ENCODE measurements at regions of chrX and their contacts with region 1.

Region 1: GRCh38 chrX:69222103-69223090 is 57.1 kb upstream of the PJA1 start:
- DNase-seq: peak; percentile 59 to 81 (median 71)
- ATAC-seq: peak; percentile 84
- H3K4me3 ChIP-seq: no peak overlapping the region
- H3K4me3 Mint-ChIP-seq: no peak overlapping the region
- H3K27ac ChIP-seq: no peak overlapping the region
- H3K27ac Mint-ChIP-seq: no peak overlapping the region
- H3K4me1 ChIP-seq: peaks cover 6% of the 10 kb centered on the region
- H3K4me1 Mint-ChIP-seq: no peaks in the 10 kb centered on the region
- H3K27me3 ChIP-seq: no peaks in the 10 kb centered on the region
- H3K27me3 Mint-ChIP-seq: no peaks in the 10 kb centered on the region
- CTCF ChIP-seq: peak; percentile 65

Region 2: DNA sequence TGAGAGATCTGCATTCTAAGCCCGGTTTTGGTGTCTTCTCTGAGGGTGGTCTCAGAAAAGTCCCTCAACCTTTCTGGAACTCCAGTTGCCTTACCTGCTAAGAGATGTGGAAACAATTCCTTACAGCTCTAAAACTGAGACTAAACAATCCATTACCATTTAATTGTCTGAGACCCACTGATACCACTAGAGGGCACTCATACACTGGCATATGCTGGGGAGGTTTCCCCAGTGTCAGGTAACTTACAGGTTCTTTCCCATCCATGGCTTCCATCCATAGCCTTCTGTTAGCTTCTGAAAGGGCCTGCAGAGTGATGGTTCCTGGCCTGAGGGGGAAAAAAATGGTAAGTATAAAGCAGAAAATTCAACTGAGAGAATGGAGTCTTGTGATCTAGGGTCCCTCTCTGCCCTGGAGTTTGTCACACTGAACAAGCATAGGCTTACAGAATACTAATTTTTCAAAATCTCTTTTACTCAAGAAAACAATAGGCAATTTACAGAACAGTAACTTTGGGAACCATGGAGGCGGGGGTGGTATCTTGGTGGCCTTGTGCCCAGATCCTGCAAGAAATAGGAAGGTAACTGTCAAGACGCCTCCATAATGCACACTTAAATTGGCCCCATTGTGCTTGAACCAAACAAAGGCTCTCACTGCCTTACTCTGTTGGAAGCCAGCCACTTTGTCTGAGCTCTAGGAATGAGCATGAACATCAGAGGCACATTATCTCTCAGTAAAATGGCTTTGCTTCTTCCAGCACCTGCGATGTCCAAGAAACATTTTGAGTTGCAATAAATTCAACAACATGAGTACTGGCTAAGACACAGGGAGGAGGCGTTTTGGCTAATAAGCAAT is 1025.2 kb before region 1 on chrX:
- CTCF ChIA-PET with region 1: no interaction called
- POLR2A ChIA-PET with region 1: no interaction called
- intact Hi-C with region 1: loop called (anchors 10 kb)
- DNase-seq: peak in 5 of 14 experiments; percentile 1 to 41 (median 35)
- ATAC-seq: no peak
- H3K4me3 ChIP-seq: no peak overlapping the region
- H3K4me3 Mint-ChIP-seq: no peak overlapping the region
- H3K27ac ChIP-seq: no peak overlapping the region
- H3K27ac Mint-ChIP-seq: no peak overlapping the region
- H3K4me1 ChIP-seq: no peaks in the 10 kb centered on the region
- H3K4me1 Mint-ChIP-seq: no peaks in the 10 kb centered on the region
- H3K27me3 ChIP-seq: no peaks in the 10 kb centered on the region
- H3K27me3 Mint-ChIP-seq: no peaks in the 10 kb centered on the region
- CTCF ChIP-seq: peak; percentile 37

Region 3: DNA sequence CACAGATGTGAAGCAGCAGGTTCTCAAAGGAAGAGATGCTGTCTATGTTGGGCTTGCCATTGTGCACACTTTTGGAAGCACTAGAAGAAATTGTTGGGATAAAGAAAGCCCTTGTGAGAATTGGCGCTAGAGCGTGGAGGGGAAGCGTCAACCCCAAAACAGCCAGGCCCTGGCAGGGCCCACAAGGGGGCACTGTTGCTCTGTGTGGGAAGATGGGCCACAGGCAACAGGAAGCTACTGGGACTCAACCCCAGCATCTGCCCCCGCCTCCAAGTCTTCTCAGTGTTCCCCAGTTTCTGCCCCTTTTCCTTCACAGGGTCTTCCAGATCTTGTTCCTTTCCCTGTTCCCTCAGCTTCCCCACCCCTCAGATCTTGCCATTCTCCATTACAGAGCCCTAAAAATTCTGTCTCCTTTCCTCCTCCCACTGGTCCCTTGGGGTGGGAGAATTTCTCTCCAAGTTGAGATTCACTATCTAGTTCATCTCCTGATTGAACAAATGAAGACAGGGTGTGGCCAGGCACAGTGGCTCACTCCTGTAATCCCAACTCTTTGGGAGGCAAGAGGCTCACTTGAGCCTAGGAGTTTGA is 489.4 kb before region 1 on chrX:
- CTCF ChIA-PET with region 1: interaction called, 3 read pairs
- POLR2A ChIA-PET with region 1: no interaction called
- intact Hi-C with region 1: loop called (anchors 2 kb)
- DNase-seq: peak; percentile 24 to 70 (median 52)
- ATAC-seq: peak; percentile 37
- H3K4me3 ChIP-seq: no peak overlapping the region
- H3K4me3 Mint-ChIP-seq: no peak overlapping the region
- H3K27ac ChIP-seq: no peak overlapping the region
- H3K27ac Mint-ChIP-seq: no peak overlapping the region
- H3K4me1 ChIP-seq: no peaks in the 10 kb centered on the region
- H3K4me1 Mint-ChIP-seq: no peaks in the 10 kb centered on the region
- H3K27me3 ChIP-seq: peaks cover 0 to 6% of the 10 kb centered on the region in 2 experiments
- H3K27me3 Mint-ChIP-seq: peaks cover 22% of the 10 kb centered on the region
- CTCF ChIP-seq: peak; percentile 41

Region 4: DNA sequence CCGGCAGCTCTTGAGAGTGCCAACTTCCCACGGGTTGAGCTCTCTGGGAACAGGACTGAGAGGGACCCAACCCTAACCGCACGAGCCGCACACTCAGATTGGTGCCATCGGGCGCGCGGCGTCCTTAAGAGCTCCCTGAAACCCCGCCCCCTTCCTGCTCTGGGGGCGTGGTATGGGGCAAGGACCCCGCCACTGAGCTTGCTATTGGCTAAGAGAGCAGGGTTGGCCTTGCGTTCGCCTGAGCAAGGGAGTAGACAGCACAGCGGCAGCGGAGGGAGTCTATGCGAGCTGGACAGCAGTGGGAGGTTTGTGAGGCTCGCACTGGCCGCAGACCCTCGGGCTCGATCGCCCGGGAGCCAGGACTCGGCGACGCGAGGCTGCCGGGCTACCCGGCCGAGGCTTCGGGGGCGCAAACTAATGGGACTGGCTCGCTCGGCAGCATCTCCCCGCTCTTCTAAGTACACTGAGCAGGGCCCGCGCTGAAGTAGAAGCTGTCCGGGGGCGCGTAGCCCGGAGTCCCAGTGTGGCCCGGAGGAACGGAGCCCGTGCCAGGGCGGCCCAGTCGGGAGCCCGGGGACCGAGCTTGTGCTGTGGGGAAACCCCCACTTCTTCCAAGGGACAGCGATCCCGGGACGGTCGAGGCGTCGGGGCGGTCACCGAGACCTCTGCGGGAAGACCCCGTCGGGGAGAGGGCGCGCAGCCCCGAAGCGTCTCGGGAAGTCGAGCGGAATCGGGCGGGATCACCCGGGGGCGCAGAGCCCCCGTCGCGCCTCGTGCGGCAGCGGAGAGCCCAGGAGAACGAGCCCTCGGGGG is 393.5 kb before region 1 on chrX and contains the start of gene EFNB1:
- CTCF ChIA-PET with region 1: interaction called, 12 read pairs
- POLR2A ChIA-PET with region 1: interaction called, 14 read pairs
- intact Hi-C with region 1: loop called (anchors 1 kb)
- DNase-seq: peak; percentile 70 to 94 (median 82)
- ATAC-seq: peak; percentile 94
- H3K4me3 ChIP-seq: peak within 1 kb of the TSS; percentile 80
- H3K4me3 Mint-ChIP-seq: peak within 1 kb of the TSS; percentile 94
- H3K27ac ChIP-seq: no peak within 1 kb of the TSS
- H3K27ac Mint-ChIP-seq: peak within 1 kb of the TSS; percentile 63
- H3K4me1 ChIP-seq: peaks cover 35% of the 10 kb centered on the region
- H3K4me1 Mint-ChIP-seq: peaks cover 23% of the 10 kb centered on the region
- H3K27me3 ChIP-seq: peaks cover 0 to 2% of the 10 kb centered on the region in 2 experiments
- H3K27me3 Mint-ChIP-seq: no peaks in the 10 kb centered on the region
- CTCF ChIP-seq: no peak
- total RNA-seq, gene EFNB1: 2.9 to 3.1 TPM

Region 5: GRCh38 chrX:69158166-69158980 is 64.0 kb before region 1 on chrX:
- CTCF ChIA-PET with region 1: no interaction called
- POLR2A ChIA-PET with region 1: no interaction called
- intact Hi-C with region 1: loop called (anchors 1 to 5 kb)
- DNase-seq: peak in 10 of 14 experiments; percentile 2 to 61 (median 20)
- ATAC-seq: peak; percentile 59
- H3K4me3 ChIP-seq: no peak overlapping the region
- H3K4me3 Mint-ChIP-seq: no peak overlapping the region
- H3K27ac ChIP-seq: no peak overlapping the region
- H3K27ac Mint-ChIP-seq: peak overlapping the region; percentile 56
- H3K4me1 ChIP-seq: peaks cover 10% of the 10 kb centered on the region
- H3K4me1 Mint-ChIP-seq: peaks cover 34% of the 10 kb centered on the region
- H3K27me3 ChIP-seq: no peaks in the 10 kb centered on the region
- H3K27me3 Mint-ChIP-seq: no peaks in the 10 kb centered on the region
- CTCF ChIP-seq: peak; percentile 14